CD8-positive, alpha-beta T cell (primary cell): ENCODE measurements at regions of chr10 and their contacts with region 1.

Region 1: DNA sequence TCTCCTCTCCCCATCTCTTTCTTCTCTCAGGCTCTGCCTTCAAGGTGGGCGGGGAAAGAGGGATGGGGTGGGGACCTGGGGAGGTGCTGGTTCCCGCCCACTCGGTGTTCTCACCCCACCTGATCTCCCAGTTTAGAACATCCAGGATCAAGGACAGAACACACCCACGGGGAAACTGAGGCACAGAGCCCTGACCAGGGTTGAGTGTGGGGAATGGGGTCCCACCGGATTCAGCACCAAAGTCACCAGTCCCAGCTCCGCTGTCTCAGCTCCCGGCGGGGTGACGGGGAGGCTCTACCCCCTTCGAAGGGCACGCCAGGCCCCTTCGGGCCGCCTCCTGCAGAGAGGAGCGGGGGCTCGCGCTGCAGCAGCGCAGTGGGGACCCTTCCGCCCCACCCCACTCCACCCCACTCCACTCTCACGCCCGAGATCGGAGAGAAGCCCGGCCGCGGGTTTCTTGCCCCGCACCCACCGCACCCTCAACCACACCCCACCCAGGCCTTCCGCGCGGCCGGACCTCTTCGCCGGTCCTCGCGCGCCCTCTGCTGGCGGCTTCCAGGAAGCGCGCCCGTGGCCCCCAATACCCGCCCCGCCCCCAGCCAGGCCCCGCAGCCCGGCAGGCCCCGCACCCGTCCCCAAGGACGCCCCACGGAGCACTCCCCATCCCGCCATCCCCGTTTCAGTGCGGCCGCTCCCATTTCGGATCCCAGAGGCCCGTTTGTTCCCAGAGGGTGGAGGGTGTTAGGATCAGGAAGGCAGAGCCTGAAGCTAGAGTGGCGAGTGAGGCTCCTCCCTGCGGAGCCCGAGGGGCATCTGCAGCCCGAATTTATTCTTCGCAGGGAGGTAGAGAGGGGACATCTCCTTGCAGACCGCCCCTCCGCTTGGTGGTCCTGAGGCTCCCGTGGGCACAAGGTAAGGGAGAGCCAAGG is 18.0 kb downstream of the POLL start:
- DNase-seq: peak; percentile 67 to 90 (median 79)
- ATAC-seq: peak; percentile 92
- H3K4me3 ChIP-seq: peak overlapping the region; percentile 69
- H3K4me3 Mint-ChIP-seq: peak overlapping the region; percentile 72
- H3K27ac ChIP-seq: no peak overlapping the region
- H3K27ac Mint-ChIP-seq: no peak overlapping the region
- H3K4me1 ChIP-seq: peaks cover 16% of the 10 kb centered on the region
- H3K4me1 Mint-ChIP-seq: peaks cover 20% of the 10 kb centered on the region
- H3K27me3 ChIP-seq: peaks cover 27 to 30% of the 10 kb centered on the region in 2 experiments
- H3K27me3 Mint-ChIP-seq: peaks cover 38% of the 10 kb centered on the region
- CTCF ChIP-seq: peak; percentile 89

Region 2: DNA sequence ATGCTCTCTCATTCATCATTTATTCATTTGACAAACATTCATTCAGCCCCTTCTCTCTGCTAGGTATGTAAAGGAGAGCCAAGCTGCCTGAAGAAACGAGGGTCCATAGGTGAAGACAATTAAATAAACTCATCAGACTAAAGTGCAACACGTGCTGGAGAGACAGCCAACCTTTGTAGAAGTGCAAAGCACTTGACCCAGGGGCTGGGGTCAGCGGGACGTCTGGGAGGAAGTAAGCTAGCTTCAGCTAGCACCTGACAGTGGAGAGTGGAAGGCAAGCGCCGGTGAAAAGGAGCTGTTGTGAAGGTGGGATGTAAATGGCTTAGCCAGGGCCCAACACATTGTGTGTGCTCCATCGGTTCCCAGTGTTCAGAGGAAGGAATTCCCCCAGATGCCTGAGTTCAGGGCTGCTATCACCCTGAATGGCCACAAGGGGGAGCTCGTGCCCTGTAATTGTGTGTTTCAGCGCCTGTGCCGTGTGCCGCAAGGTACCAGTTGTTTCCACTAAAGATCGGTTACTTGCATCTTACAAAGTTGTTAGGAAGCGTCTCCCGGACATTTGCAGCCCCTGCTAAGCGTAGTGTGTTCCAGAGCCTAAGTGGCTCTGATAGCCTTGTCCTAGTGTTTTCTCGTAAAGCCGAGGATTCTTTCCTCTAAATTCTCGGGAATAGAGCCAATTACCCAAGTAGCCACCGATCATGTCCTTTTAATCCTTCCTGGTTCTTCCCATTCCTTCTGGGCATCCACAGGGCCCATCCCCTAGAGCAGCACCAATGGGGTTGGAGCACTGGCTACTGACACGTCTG is 408.4 kb before region 1 on chr10:
- CTCF ChIA-PET with region 1: interaction called, 3 read pairs
- POLR2A ChIA-PET with region 1: no interaction called
- intact Hi-C with region 1: loop called in 1 of 2 experiments (anchors 1 kb)
- DNase-seq: peak; percentile 33 to 84 (median 70)
- ATAC-seq: peak; percentile 97
- H3K4me3 ChIP-seq: no peak overlapping the region
- H3K4me3 Mint-ChIP-seq: no peak overlapping the region
- H3K27ac ChIP-seq: no peak overlapping the region
- H3K27ac Mint-ChIP-seq: no peak overlapping the region
- H3K4me1 ChIP-seq: peaks cover 3% of the 10 kb centered on the region
- H3K4me1 Mint-ChIP-seq: peaks cover 5% of the 10 kb centered on the region
- H3K27me3 ChIP-seq: peaks cover 3 to 6% of the 10 kb centered on the region in 2 experiments
- H3K27me3 Mint-ChIP-seq: peaks cover 51% of the 10 kb centered on the region
- CTCF ChIP-seq: peak; percentile 90

Region 3: GRCh38 chr10:101249171-101249581 is 320.9 kb before region 1 on chr10:
- CTCF ChIA-PET with region 1: no interaction called
- POLR2A ChIA-PET with region 1: no interaction called
- intact Hi-C with region 1: no loop called
- DNase-seq: no peak
- ATAC-seq: no peak
- H3K4me3 ChIP-seq: no peak overlapping the region
- H3K4me3 Mint-ChIP-seq: no peak overlapping the region
- H3K27ac ChIP-seq: no peak overlapping the region
- H3K27ac Mint-ChIP-seq: no peak overlapping the region
- H3K4me1 ChIP-seq: no peaks in the 10 kb centered on the region
- H3K4me1 Mint-ChIP-seq: no peaks in the 10 kb centered on the region
- H3K27me3 ChIP-seq: no peaks in the 10 kb centered on the region
- H3K27me3 Mint-ChIP-seq: peaks cover 47% of the 10 kb centered on the region
- CTCF ChIP-seq: no peak

Region 4: GRCh38 chr10:101297901-101298486 is 272.1 kb before region 1 on chr10:
- CTCF ChIA-PET with region 1: interaction called, 5 read pairs
- POLR2A ChIA-PET with region 1: no interaction called
- intact Hi-C with region 1: loop called in 1 of 2 experiments (anchors 2 kb)
- DNase-seq: peak; percentile 51 to 82 (median 74)
- ATAC-seq: peak; percentile 89
- H3K4me3 ChIP-seq: no peak overlapping the region
- H3K4me3 Mint-ChIP-seq: no peak overlapping the region
- H3K27ac ChIP-seq: no peak overlapping the region
- H3K27ac Mint-ChIP-seq: no peak overlapping the region
- H3K4me1 ChIP-seq: peaks cover under 1% of the 10 kb centered on the region
- H3K4me1 Mint-ChIP-seq: peaks cover 2% of the 10 kb centered on the region
- H3K27me3 ChIP-seq: peaks cover 3 to 4% of the 10 kb centered on the region in 2 experiments
- H3K27me3 Mint-ChIP-seq: peaks cover 50% of the 10 kb centered on the region
- CTCF ChIP-seq: peak; percentile 89

Region 5: GRCh38 chr10:101536800-101537199 is 33.3 kb before region 1 on chr10:
- CTCF ChIA-PET with region 1: interaction called, 17 read pairs
- POLR2A ChIA-PET with region 1: no interaction called
- intact Hi-C with region 1: loop called (anchors 1 kb)
- DNase-seq: peak in 2 of 9 experiments; percentile 44 to 54
- ATAC-seq: peak; percentile 34
- H3K4me3 ChIP-seq: no peak overlapping the region
- H3K4me3 Mint-ChIP-seq: no peak overlapping the region
- H3K27ac ChIP-seq: no peak overlapping the region
- H3K27ac Mint-ChIP-seq: no peak overlapping the region
- H3K4me1 ChIP-seq: no peaks in the 10 kb centered on the region
- H3K4me1 Mint-ChIP-seq: no peaks in the 10 kb centered on the region
- H3K27me3 ChIP-seq: no peaks in the 10 kb centered on the region
- H3K27me3 Mint-ChIP-seq: no peaks in the 10 kb centered on the region
- CTCF ChIP-seq: peak; percentile 43

Region 6: GRCh38 chr10:101580486-101581399 is 10.6 kb after region 1 on chr10:
- CTCF ChIA-PET with region 1: interaction called, 20 read pairs
- POLR2A ChIA-PET with region 1: no interaction called
- intact Hi-C with region 1: no loop called
- DNase-seq: no peak
- ATAC-seq: no peak
- H3K4me3 ChIP-seq: no peak overlapping the region
- H3K4me3 Mint-ChIP-seq: no peak overlapping the region
- H3K27ac ChIP-seq: no peak overlapping the region
- H3K27ac Mint-ChIP-seq: no peak overlapping the region
- H3K4me1 ChIP-seq: no peaks in the 10 kb centered on the region
- H3K4me1 Mint-ChIP-seq: peaks cover 4% of the 10 kb centered on the region
- H3K27me3 ChIP-seq: no peaks in the 10 kb centered on the region
- H3K27me3 Mint-ChIP-seq: no peaks in the 10 kb centered on the region
- CTCF ChIP-seq: no peak

Region 7: DNA sequence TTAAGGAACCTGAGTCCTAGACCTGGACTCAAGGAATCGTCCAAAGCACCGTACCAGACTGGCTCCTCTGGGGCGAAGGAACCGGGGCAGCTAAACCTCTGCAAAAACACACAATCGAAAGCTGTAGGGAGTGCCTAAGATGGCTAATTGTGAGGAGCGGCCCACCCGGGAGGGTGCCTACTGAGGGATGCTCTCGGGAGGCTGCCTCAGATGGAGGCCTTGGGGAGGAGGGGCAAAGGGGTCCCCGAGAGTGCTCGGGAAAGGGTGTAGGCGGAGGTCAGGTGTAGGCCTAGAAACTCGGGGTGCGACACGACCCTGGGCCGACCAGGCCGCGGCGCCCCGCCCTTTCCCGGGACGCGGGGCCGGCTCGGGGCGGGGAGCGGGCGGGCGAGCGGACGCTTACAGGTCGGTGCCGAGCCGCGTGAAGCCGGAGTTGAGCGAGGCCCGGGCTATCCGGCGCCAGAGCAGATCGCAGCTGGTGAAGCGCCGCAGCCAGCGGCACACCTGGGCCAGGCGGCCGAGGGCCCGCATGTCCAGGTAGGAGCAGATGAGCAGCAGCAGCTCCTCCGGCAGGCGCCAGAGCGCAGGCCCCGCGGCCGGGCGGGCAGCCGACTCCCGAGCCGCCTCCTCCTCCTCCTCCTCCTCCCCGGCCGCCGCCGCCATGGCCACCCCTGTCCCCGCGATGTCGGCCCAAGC is 124.0 kb after region 1 on chr10:
- CTCF ChIA-PET with region 1: no interaction called
- POLR2A ChIA-PET with region 1: no interaction called
- intact Hi-C with region 1: loop called in 1 of 2 experiments (anchors 1 kb)
- DNase-seq: peak; percentile 42 to 83 (median 70)
- ATAC-seq: peak; percentile 66
- H3K4me3 ChIP-seq: peak overlapping the region; percentile 85 to 88
- H3K4me3 Mint-ChIP-seq: peak overlapping the region; percentile 97
- H3K27ac ChIP-seq: peak overlapping the region; percentile 97 to 99
- H3K27ac Mint-ChIP-seq: peak overlapping the region; percentile 99
- H3K4me1 ChIP-seq: peaks cover 36% of the 10 kb centered on the region
- H3K4me1 Mint-ChIP-seq: peaks cover 48% of the 10 kb centered on the region
- H3K27me3 ChIP-seq: no peaks in the 10 kb centered on the region
- H3K27me3 Mint-ChIP-seq: no peaks in the 10 kb centered on the region
- CTCF ChIP-seq: no peak